WTC11 (cell line): ENCODE measurements at regions of chr14 and their contacts with region 1.

Region 1: GRCh38 chr14:94036313-94037050 is 10.3 kb downstream of the OTUB2 start:
- DNase-seq: peak; percentile 85
- ATAC-seq: peak; percentile 98
- H3K4me3 Mint-ChIP-seq: no peak overlapping the region
- H3K27ac Mint-ChIP-seq: no peak overlapping the region
- H3K4me1 Mint-ChIP-seq: peaks cover 2% of the 10 kb centered on the region; the same call in 1 of the 2 replicates
- H3K27me3 Mint-ChIP-seq: no peaks in the 10 kb centered on the region
- CTCF ChIP-seq: peak; percentile 77

Region 2: GRCh38 chr14:94021001-94021400 is 15.5 kb before region 1 on chr14:
- CTCF ChIA-PET with region 1: interaction called, 37 read pairs
- POLR2A ChIA-PET with region 1: no interaction called
- DNase-seq: no peak
- ATAC-seq: no peak
- H3K4me3 Mint-ChIP-seq: no peak overlapping the region
- H3K27ac Mint-ChIP-seq: no peak overlapping the region; the same call in 1 of the 2 replicates
- H3K4me1 Mint-ChIP-seq: peaks cover 34% of the 10 kb centered on the region
- H3K27me3 Mint-ChIP-seq: no peaks in the 10 kb centered on the region
- CTCF ChIP-seq: no peak

Region 3: DNA sequence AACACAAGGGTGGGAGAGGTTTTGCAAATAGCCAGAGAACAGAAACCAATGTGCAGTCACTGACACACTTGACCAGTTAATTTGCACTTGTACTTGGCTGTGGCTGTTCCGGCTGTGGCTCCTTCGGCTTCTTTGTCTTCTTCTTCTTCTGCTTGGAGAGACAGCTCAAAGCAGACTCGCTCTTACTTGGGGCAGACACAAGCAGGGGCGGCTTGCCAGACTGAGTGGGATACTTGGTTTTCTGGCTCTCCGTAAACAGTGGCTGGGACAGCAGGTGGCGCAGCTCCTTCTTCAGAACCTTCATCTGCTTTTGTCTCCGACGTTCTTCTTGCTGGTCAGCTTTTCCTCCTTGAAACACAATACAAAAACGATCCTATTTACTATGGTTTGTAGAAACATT is 14.6 kb after region 1 on chr14:
- CTCF ChIA-PET with region 1: interaction called, 31 read pairs
- POLR2A ChIA-PET with region 1: no interaction called
- DNase-seq: peak; percentile 50
- ATAC-seq: peak; percentile 81
- H3K4me3 Mint-ChIP-seq: no peak overlapping the region
- H3K27ac Mint-ChIP-seq: peak overlapping the region; percentile 17; the same call in 1 of the 2 replicates
- H3K4me1 Mint-ChIP-seq: peaks cover 11% of the 10 kb centered on the region
- H3K27me3 Mint-ChIP-seq: no peaks in the 10 kb centered on the region
- CTCF ChIP-seq: no peak

Region 4: GRCh38 chr14:94080471-94081289 is 44.2 kb after region 1 on chr14 and contains the start of gene DDX24:
- CTCF ChIA-PET with region 1: interaction called, 14 read pairs
- POLR2A ChIA-PET with region 1: interaction called, 4 read pairs
- DNase-seq: peak; percentile 96
- ATAC-seq: peak; percentile 36
- H3K4me3 Mint-ChIP-seq: peak within 1 kb of the TSS; percentile 100
- H3K27ac Mint-ChIP-seq: peak within 1 kb of the TSS; percentile 93
- H3K4me1 Mint-ChIP-seq: peaks cover 29% of the 10 kb centered on the region
- H3K27me3 Mint-ChIP-seq: no peaks in the 10 kb centered on the region
- CTCF ChIP-seq: no peak
- total RNA-seq, gene DDX24: 137 to 174 TPM (median 140 TPM) in 3 replicates

Region 5: DNA sequence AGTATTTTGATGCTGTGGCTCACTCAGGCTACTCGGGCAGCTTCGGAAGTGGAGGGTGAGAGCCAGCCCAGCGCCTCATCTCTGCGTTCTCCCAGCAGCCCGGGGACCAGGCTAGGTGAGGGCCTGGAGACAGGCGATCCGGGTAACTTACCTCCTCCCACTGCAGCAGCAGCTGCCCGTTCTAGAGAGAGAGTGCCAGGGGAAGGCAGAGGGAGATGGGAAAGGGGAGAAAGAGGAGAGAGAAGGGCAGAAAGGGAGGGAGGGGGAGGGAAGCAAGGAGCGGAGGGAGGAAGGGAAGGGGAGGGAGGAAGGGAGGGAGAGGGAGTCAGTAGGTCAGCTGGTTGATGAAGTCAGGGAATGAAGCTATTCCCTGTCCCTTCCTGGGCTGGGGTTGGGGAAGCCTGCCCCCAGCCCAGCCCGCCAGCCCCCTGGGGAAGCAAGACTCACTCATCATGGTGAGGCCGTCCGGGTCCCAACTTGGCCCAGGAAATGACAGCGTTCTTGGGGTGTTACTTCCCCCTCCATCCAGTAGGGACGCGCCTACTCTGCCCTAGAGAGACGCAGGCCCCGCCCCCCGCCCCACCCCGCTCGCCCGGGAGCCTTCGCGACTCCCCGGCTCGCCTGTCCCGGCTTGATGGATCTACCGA is 92.8 kb after region 1 on chr14 and contains the start of gene IFI27L2:
- CTCF ChIA-PET with region 1: interaction called, 29 read pairs
- POLR2A ChIA-PET with region 1: no interaction called
- DNase-seq: peak; percentile 76
- ATAC-seq: peak; percentile 86
- H3K4me3 Mint-ChIP-seq: peak within 1 kb of the TSS; percentile 75
- H3K27ac Mint-ChIP-seq: peak within 1 kb of the TSS; percentile 86
- H3K4me1 Mint-ChIP-seq: peaks cover 11% of the 10 kb centered on the region
- H3K27me3 Mint-ChIP-seq: peaks cover 8% of the 10 kb centered on the region
- CTCF ChIP-seq: peak; percentile 19; the same call in 1 of the 2 replicates
- total RNA-seq, gene IFI27L2: 22.1 to 37.2 TPM (median 35.5 TPM) in 3 replicates

Region 6: GRCh38 chr14:94173885-94174603 is 137.6 kb after region 1 on chr14 and contains the start of gene PPP4R4:
- CTCF ChIA-PET with region 1: interaction called, 13 read pairs
- POLR2A ChIA-PET with region 1: no interaction called
- DNase-seq: peak; percentile 98
- ATAC-seq: peak; percentile 89
- H3K4me3 Mint-ChIP-seq: peak within 1 kb of the TSS; percentile 88
- H3K27ac Mint-ChIP-seq: peak within 1 kb of the TSS; percentile 60
- H3K4me1 Mint-ChIP-seq: peaks cover 30% of the 10 kb centered on the region
- H3K27me3 Mint-ChIP-seq: peaks cover 50% of the 10 kb centered on the region
- CTCF ChIP-seq: no peak
- total RNA-seq, gene PPP4R4: 8.1 to 9.6 TPM (median 8.2 TPM) in 3 replicates